Endothelial cell of umbilical vein (primary cell): ENCODE measurements at regions of chr10 and their contacts with region 1.

Region 1: GRCh38 chr10:69639291-69640195 is 9.5 kb downstream of the FAM241B start:
- DNase-seq: peak; percentile 58
- H3K4me3 ChIP-seq: no peak overlapping the region
- H3K27ac ChIP-seq: no peak overlapping the region
- H3K4me1 ChIP-seq: no peaks in the 10 kb centered on the region
- H3K27me3 ChIP-seq: peaks cover 3 to 9% of the 10 kb centered on the region in 2 experiments
- CTCF ChIP-seq: peak; percentile 78 to 82
- POLR2A ChIP-seq: no peak

Region 2: DNA sequence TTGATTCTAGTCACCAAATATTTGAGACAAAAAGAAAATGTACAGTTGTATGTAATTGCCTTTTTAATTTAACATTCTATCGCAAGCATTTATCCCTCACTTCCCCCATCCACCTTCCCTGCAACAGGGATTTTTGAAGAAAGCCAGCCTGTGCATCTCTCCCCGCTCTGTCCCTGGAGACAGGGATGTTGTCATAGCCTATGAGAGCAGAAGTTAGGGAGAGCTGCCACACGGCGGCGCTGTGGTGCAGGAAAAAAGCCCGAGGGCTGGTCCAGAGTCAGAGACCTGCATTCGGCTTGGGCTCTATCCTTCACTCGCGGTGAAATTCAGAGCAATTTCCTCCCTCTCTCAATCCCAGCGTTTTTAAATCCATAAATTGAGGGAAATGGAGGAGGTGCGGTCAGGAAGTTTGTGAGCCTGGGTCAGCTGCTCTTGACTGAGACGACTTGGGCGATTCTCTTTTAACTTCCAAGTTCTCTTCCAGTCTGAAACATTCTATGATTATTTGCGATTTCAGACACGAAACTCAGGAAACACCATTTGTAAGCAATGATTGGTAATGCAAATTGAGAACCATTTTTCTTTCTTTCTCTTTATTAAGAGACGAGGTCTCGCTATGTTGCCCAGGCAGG is 401.9 kb before region 1 on chr10:
- CTCF ChIA-PET with region 1: no interaction called
- POLR2A ChIA-PET with region 1: no interaction called
- dilution Hi-C with region 1: no loop called
- intact Hi-C with region 1: loop called (anchors 10 kb)
- DNase-seq: peak; percentile 81
- H3K4me3 ChIP-seq: no peak overlapping the region
- H3K27ac ChIP-seq: no peak overlapping the region
- H3K4me1 ChIP-seq: peaks cover 16% of the 10 kb centered on the region
- H3K27me3 ChIP-seq: no peaks in the 10 kb centered on the region
- CTCF ChIP-seq: peak; percentile 81 to 90
- POLR2A ChIP-seq: no peak

Region 3: DNA sequence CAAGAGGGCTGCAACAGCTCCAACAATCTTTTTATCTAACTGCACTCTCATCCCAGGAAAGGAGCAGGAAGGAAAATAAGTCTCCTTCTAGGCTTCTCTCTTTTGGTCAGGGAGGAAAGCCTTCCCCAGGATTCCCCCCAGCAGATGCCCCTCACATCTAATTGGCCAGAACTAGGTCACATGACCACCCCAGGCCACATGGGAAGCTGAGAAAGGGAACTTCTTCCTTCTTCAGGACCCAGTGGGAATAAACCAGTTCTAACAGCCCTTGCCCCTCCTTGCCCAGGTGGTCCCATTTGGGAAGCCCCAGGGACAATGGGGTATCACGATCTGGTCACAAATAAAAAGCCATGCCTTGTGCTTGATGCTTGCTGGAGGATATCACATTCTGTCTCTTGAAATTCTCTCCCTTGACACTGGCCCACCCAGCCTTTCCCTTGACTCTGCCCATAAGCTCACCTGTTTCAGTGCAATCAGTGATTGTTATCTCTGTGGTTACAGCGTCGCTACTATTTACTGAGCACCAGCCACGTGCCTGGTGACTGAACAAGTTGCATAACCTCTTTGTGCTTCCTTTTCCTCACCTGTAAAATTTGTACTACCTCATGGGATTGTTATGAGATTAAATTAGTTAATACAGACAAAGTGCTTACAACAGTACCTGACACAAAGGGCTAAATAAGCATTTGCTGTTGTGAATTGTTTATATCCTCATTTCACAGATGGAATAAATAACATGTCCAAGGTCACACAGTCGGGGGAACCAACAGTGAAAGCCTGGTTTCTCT is 213.8 kb before region 1 on chr10:
- CTCF ChIA-PET with region 1: interaction called, 5 read pairs
- POLR2A ChIA-PET with region 1: no interaction called
- dilution Hi-C with region 1: no loop called
- intact Hi-C with region 1: loop called (anchors 5 kb)
- DNase-seq: no peak
- H3K4me3 ChIP-seq: no peak overlapping the region
- H3K27ac ChIP-seq: no peak overlapping the region
- H3K4me1 ChIP-seq: no peaks in the 10 kb centered on the region
- H3K27me3 ChIP-seq: peaks cover 0 to 1% of the 10 kb centered on the region in 2 experiments
- CTCF ChIP-seq: no peak
- POLR2A ChIP-seq: no peak

Region 4: DNA sequence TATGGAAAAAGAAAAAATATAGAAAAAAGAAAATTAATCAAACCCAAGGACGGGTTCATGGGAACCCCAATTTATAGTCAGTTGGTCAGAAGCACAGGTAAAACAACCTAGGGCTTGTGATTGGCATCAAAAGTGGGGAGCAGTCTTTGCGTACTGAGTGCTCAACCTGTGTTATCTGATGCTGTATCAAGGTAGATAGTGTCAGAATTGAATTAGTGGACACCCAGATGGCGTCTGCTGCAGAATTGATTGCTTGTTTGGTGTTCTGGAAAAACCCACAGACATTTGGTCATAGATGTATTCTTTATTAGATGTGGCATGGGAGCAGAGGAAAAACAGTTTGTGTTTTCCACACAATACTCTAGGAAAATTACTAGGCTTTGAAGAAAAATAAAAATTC is 105.9 kb before region 1 on chr10:
- CTCF ChIA-PET with region 1: interaction called, 6 read pairs
- POLR2A ChIA-PET with region 1: no interaction called
- dilution Hi-C with region 1: no loop called
- intact Hi-C with region 1: loop called (anchors 5 kb)
- DNase-seq: no peak
- H3K4me3 ChIP-seq: no peak overlapping the region
- H3K27ac ChIP-seq: no peak overlapping the region
- H3K4me1 ChIP-seq: no peaks in the 10 kb centered on the region
- H3K27me3 ChIP-seq: peaks cover 4 to 12% of the 10 kb centered on the region in 2 experiments
- CTCF ChIP-seq: no peak
- POLR2A ChIP-seq: no peak

Region 5: DNA sequence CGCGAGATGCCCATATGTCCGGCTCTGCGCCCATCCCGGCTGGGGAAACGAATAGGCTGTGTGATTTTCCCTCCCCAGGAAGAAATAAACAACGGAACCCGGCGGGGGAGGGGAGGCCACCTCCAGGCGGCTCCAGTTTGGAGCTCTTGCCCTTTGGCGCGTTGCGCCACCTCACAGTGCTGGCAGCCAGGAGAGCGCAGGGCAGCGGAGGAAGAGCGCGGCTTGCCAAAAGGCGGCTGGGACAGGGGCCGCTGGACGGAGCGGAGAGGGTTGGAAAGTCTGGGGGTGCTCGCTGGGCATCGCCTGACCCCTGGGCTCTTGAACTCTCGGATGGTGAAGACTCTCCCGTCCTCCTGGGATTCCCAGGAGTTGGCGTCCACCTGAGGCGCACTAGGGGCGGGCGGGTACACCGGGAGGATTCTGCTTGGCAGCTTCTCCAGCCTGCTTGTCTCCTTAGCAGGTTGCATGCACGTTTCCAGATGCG is 61.0 kb before region 1 on chr10:
- CTCF ChIA-PET with region 1: no interaction called
- POLR2A ChIA-PET with region 1: no interaction called
- dilution Hi-C with region 1: no loop called
- intact Hi-C with region 1: no loop called
- DNase-seq: no peak
- H3K4me3 ChIP-seq: no peak overlapping the region
- H3K27ac ChIP-seq: no peak overlapping the region
- H3K4me1 ChIP-seq: no peaks in the 10 kb centered on the region
- H3K27me3 ChIP-seq: peaks cover 57 to 78% of the 10 kb centered on the region in 2 experiments
- CTCF ChIP-seq: no peak
- POLR2A ChIP-seq: no peak

Region 6: DNA sequence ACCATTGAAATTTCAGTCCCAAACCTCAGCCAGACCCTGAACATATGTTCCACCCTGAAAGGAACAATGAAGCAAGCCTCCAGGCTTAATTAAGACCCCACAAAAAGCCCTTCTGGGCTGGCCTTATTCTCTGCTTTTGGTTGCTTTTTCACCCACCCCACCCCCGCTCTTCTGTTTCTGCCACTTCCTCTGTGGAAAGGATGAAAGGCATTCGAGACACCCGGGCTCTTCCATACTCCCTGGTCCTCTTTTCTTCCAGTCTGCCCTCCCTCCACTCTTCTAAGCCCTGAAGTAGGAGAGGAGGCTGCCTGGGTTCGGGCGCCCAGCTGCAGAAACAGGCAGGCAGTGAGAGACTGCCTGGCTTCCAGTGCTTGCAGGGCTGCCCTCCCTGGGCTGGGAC is 18.9 kb before region 1 on chr10:
- CTCF ChIA-PET with region 1: no interaction called
- POLR2A ChIA-PET with region 1: no interaction called
- dilution Hi-C with region 1: no loop called
- intact Hi-C with region 1: no loop called
- DNase-seq: no peak
- H3K4me3 ChIP-seq: no peak overlapping the region
- H3K27ac ChIP-seq: no peak overlapping the region
- H3K4me1 ChIP-seq: no peaks in the 10 kb centered on the region
- H3K27me3 ChIP-seq: peaks cover 21 to 37% of the 10 kb centered on the region in 2 experiments
- CTCF ChIP-seq: no peak
- POLR2A ChIP-seq: no peak